Caco-2 (cell line): ENCODE measurements at regions of chr16 and their contacts with region 1.

Region 1: DNA sequence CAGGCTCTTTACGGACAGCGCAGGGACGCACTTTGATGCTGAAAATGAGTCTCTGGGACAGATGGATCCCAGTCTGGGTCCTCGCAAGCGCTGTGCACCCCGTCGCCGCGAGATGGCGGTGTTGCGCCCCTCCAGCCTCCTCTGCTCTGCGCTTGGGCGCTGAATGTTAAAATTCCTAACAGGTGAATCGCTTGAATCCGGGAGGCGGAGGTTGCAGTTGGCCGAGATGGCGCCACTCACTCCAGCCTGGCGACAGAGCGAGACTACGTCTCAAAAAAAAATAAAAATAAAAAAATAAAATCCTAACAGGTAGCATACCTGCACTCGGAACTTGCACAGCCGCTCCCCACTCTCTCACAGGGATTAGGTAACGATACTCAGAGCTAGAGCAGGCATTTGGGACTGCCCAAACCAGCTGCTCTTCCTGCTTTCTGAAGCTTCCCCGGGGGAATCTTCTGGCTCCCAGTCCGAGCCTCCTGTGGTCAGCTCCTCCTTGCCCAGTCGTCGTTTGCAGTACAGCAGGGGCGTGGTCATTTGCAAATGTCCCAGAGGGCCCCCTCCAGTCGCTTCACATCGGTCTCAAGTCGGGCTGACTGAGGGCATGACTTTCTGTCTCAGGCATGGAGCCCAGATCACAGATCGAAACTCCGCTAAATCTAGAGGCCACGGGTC is 26.2 kb upstream of the OSGIN1 start:
- DNase-seq: peak; percentile 90 to 95
- H3K4me3 ChIP-seq: peak overlapping the region; percentile 43
- H3K4me3 Mint-ChIP-seq: peak overlapping the region; percentile 79
- H3K27ac Mint-ChIP-seq: peak overlapping the region; percentile 95
- H3K4me1 ChIP-seq: peaks cover 36% of the 10 kb centered on the region
- H3K4me1 Mint-ChIP-seq: peaks cover 26% of the 10 kb centered on the region
- H3K27me3 ChIP-seq: no peaks in the 10 kb centered on the region
- H3K27me3 Mint-ChIP-seq: no peaks in the 10 kb centered on the region
- CTCF ChIP-seq: peak; percentile 94 to 98

Region 2: DNA sequence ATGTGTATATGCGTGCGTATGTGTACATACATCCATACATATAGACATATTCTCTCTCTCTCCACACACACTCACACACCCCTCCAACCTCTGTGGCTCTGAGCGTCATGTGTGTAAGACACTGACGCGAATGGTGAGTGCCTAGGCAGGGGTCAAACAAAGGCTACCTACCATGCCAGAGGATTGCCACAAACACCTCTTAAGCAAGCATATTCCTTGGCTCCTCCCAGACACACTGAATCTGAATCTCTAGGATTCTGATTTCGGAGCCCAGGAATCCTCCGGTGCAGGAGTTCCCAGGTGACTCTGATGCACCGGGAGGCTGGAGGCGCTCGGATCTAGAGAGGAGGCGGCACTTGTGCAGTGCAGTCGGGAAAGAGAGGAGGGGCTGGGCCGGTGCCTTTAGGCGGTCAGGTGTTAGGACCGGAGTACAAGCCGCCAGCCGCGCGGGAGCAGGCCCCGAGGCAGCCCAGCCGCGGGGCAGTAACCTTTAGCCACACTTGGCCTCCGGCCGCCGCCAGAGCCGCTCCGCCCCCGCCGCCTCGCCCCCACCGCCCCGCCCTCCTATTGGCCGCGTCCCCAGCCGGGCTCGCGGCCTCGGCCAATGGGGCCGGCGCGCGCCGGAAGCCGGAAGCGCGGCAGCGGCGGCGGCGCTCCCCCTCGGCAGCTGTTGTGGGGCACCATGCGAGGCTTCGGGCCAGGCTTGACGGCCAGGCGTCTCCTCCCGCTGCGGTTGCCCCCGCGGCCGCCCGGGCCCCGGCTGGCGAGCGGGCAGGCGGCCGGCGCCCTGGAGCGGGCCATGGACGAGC is 28.2 kb before region 1 on chr16 and contains the start of gene MLYCD:
- CTCF ChIA-PET with region 1: interaction called, 5 read pairs
- POLR2A ChIA-PET with region 1: no interaction called
- intact Hi-C with region 1: loop called (anchors 1 kb)
- DNase-seq: peak; percentile 94
- H3K4me3 ChIP-seq: peak within 1 kb of the TSS; percentile 94
- H3K4me3 Mint-ChIP-seq: peak within 1 kb of the TSS; percentile 90
- H3K27ac Mint-ChIP-seq: peak within 1 kb of the TSS; percentile 71
- H3K4me1 ChIP-seq: 0 out of 2 replicates have a peak, but pooled peaks cover 12% of the 10 kb centered on the region
- H3K4me1 Mint-ChIP-seq: peaks cover 13% of the 10 kb centered on the region
- H3K27me3 ChIP-seq: no peaks in the 10 kb centered on the region
- H3K27me3 Mint-ChIP-seq: no peaks in the 10 kb centered on the region
- CTCF ChIP-seq: no peak
- total RNA-seq, gene MLYCD: 8.7 and 9.0 TPM in 2 replicates

Region 3: DNA sequence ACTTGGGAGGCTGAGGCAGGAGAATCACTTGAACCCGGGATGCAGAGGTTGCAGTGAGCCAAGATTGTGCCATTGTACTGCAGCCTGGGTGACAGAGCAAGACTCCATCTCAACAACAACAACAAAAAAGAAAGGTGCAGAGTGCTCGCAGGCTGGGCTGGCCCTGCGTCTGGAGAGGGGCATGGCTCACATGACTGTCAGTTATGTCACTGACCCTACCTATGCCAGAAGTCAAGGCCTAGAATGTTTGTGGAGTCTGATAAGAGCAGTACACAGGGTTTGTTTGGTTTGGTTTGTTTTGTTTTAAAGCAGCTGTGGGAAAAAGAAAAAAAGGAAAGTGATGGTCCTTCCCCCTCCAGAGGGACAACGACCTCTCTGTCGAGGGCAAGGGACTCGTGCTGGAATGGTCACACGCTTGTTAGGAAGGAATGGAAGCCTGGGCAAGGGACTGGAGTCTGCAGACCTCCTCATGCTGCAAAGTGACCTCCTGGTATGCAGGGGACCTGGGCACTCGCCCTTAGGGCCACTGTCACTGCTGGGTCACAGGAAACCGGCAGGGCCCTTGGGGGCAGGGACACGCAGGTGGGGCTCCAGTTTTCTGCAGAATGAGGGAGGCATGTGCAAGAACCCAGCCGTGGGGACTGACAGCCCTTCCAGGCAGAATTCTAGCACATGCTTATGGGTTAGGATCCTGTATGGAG is 16.1 kb after region 1 on chr16:
- CTCF ChIA-PET with region 1: interaction called, 3 read pairs
- POLR2A ChIA-PET with region 1: interaction called, 3 read pairs
- intact Hi-C with region 1: loop called (anchors 1 kb)
- DNase-seq: peak in 1 of 2 experiments; percentile 58
- H3K4me3 ChIP-seq: no peak overlapping the region
- H3K4me3 Mint-ChIP-seq: no peak overlapping the region
- H3K27ac Mint-ChIP-seq: peak overlapping the region; percentile 3
- H3K4me1 ChIP-seq: peaks cover 32% of the 10 kb centered on the region
- H3K4me1 Mint-ChIP-seq: peaks cover 21% of the 10 kb centered on the region
- H3K27me3 ChIP-seq: no peaks in the 10 kb centered on the region
- H3K27me3 Mint-ChIP-seq: no peaks in the 10 kb centered on the region
- CTCF ChIP-seq: no peak

Region 4: GRCh38 chr16:83952940-83953795 is 26.3 kb after region 1 on chr16 and contains the start of gene OSGIN1:
- CTCF ChIA-PET with region 1: interaction called, 44 read pairs
- POLR2A ChIA-PET with region 1: interaction called, 31 read pairs
- intact Hi-C with region 1: loop called (anchors 1 kb)
- DNase-seq: peak; percentile 92
- H3K4me3 ChIP-seq: peak within 1 kb of the TSS; percentile 68
- H3K4me3 Mint-ChIP-seq: peak within 1 kb of the TSS; percentile 94
- H3K27ac Mint-ChIP-seq: peak within 1 kb of the TSS; percentile 94
- H3K4me1 ChIP-seq: peaks cover 22% of the 10 kb centered on the region
- H3K4me1 Mint-ChIP-seq: peaks cover 12% of the 10 kb centered on the region
- H3K27me3 ChIP-seq: no peaks in the 10 kb centered on the region
- H3K27me3 Mint-ChIP-seq: no peaks in the 10 kb centered on the region
- CTCF ChIP-seq: no peak
- total RNA-seq, gene OSGIN1: 18.6 and 21.8 TPM in 2 replicates

Region 5: DNA sequence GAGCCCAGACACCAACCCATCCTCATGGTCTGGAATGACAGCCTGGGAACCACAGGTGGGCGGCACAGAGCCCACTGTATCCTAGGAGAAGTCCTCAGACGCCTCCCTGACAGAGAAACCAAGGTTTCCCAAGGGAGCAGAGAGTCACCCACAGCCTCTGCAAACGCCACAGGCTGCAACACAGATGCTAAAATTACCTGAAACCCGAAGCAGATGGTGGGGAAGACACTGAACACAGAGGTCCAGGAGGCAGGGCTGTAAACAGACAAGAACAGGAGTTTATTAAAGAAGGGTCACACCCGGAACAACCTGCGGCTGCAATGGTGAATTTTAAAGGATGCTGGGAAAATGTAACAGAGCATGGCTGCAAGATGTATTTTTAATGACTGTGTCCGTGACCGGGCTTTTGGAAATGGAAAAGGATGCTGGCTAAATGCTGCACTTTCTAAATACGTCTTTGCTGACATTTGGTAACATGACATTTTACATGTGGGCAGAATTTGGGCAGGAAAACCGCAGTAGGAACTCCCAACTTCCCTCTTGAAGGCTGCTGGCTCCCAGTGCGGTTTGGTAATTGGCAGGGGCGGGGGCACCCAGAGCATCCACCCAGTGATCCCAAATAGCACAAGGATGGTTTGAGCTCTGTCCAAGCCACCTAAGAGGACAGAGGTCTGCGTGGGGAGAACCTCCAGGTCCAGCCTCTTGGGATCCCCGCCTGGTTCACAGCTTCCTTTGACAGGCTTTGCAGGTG is 102.6 kb after region 1 on chr16:
- CTCF ChIA-PET with region 1: no interaction called
- POLR2A ChIA-PET with region 1: no interaction called
- intact Hi-C with region 1: no loop called
- DNase-seq: no peak
- H3K4me3 ChIP-seq: no peak overlapping the region
- H3K4me3 Mint-ChIP-seq: no peak overlapping the region
- H3K27ac Mint-ChIP-seq: no peak overlapping the region
- H3K4me1 ChIP-seq: no peaks in the 10 kb centered on the region
- H3K4me1 Mint-ChIP-seq: no peaks in the 10 kb centered on the region
- H3K27me3 ChIP-seq: no peaks in the 10 kb centered on the region
- H3K27me3 Mint-ChIP-seq: peaks cover 9% of the 10 kb centered on the region
- CTCF ChIP-seq: no peak

Region 6: DNA sequence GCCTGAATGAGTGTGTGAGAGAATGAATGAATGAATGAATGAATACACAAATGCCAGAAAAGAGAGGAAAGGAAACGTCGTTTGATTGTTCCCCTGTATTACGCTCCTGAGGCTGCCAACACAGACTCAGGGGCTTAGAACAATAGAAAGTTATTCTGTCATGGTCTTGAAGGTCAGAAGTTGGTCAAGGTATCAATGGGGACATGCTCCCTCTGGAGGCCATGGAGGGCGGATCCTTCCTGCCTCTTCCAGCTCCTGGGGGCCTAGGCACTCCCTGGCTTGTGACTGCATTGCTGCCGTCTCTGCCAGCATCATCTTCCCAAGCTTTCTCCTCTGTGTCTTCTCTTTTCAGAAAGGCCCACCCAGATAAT is 117.2 kb after region 1 on chr16:
- CTCF ChIA-PET with region 1: no interaction called
- POLR2A ChIA-PET with region 1: no interaction called
- intact Hi-C with region 1: loop called (anchors 1 kb)
- DNase-seq: peak; percentile 65 to 69
- H3K4me3 ChIP-seq: no peak overlapping the region
- H3K4me3 Mint-ChIP-seq: peak overlapping the region; percentile 71
- H3K27ac Mint-ChIP-seq: no peak overlapping the region
- H3K4me1 ChIP-seq: peaks cover 30% of the 10 kb centered on the region
- H3K4me1 Mint-ChIP-seq: peaks cover 17% of the 10 kb centered on the region
- H3K27me3 ChIP-seq: no peaks in the 10 kb centered on the region
- H3K27me3 Mint-ChIP-seq: peaks cover 2% of the 10 kb centered on the region
- CTCF ChIP-seq: peak; percentile 43 to 65